ENCODE measurements at regions of chr4 and their contacts with region 1.

Region 1: DNA sequence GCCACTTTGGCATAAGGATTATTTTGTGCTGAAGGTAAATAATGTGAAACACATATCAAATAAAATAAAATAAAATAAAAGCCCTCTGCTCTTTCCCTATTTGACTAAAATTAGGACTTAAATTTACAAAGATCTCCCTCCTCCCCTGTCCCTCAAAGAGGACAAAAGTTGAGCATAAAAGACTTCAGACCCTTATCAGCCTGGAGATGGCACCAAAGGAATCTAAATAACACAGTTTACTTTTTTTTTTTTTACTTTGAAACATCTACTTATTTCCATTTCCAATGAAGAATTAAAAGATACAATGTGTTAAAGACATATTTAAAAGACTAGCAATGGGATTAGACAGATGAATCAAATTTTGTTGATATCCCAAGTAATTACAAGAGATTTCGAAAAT is 89.7 kb downstream of the EPHA5 start:
- DNase-seq: no peak
- H3K4me3 ChIP-seq: no peak overlapping the region
- H3K4me3 Mint-ChIP-seq: no peak overlapping the region
- H3K27ac Mint-ChIP-seq: no peak overlapping the region
- H3K4me1 ChIP-seq: no peaks in the 10 kb centered on the region
- H3K4me1 Mint-ChIP-seq: no peaks in the 10 kb centered on the region
- H3K27me3 ChIP-seq: no peaks in the 10 kb centered on the region
- H3K27me3 Mint-ChIP-seq: peaks cover 7% of the 10 kb centered on the region
- CTCF ChIP-seq: no peak

Region 2: GRCh38 chr4:65865489-65865888 is 284.9 kb after region 1 on chr4:
- CTCF ChIA-PET with region 1: no interaction called
- POLR2A ChIA-PET with region 1: no interaction called
- intact Hi-C with region 1: loop called (anchors 2 kb)
- DNase-seq: peak in 1 of 2 experiments; percentile 12
- H3K4me3 ChIP-seq: no peak overlapping the region
- H3K4me3 Mint-ChIP-seq: no peak overlapping the region
- H3K27ac Mint-ChIP-seq: no peak overlapping the region
- H3K4me1 ChIP-seq: no peaks in the 10 kb centered on the region
- H3K4me1 Mint-ChIP-seq: no peaks in the 10 kb centered on the region
- H3K27me3 ChIP-seq: no peaks in the 10 kb centered on the region
- H3K27me3 Mint-ChIP-seq: no peaks in the 10 kb centered on the region
- CTCF ChIP-seq: peak in 1 of 2 experiments; percentile 37

Region 3: DNA sequence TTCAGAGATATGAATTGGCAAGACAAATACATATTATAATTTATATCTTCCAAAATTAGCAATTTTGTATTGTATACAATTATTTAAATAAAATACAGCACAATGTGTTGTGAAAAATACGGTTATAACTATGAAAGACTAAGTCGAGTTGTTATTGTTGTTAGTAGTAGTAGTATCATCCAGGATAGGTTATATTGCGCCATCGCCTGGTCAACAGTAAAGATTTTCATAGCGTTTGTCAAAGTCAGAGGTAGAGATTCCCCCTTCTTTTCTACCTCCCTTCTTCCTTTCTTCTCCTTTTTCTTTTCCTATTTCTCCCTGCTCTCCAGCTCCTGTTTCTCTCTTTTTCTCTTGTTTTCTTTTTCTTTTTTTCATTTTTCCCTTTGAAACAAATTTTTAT is 588.8 kb after region 1 on chr4:
- CTCF ChIA-PET with region 1: no interaction called
- POLR2A ChIA-PET with region 1: no interaction called
- intact Hi-C with region 1: loop called (anchors 10 kb)
- DNase-seq: peak in 1 of 2 experiments; percentile 4
- H3K4me3 ChIP-seq: no peak overlapping the region
- H3K4me3 Mint-ChIP-seq: no peak overlapping the region
- H3K27ac Mint-ChIP-seq: no peak overlapping the region
- H3K4me1 ChIP-seq: no peaks in the 10 kb centered on the region
- H3K4me1 Mint-ChIP-seq: no peaks in the 10 kb centered on the region
- H3K27me3 ChIP-seq: no peaks in the 10 kb centered on the region
- H3K27me3 Mint-ChIP-seq: no peaks in the 10 kb centered on the region
- CTCF ChIP-seq: no peak

Measured in Caco-2 (cell line).